Mammary epithelial cell (primary cell): ENCODE measurements at regions of chrX and their contacts with region 1.

Region 1: GRCh38 chrX:97498093-97498492 is 614.4 kb downstream of the RPA4 start:
- DNase-seq: no peak
- H3K4me3 ChIP-seq: no peak overlapping the region
- H3K27ac ChIP-seq: no peak overlapping the region
- H3K4me1 ChIP-seq: no peaks in the 10 kb centered on the region
- H3K27me3 ChIP-seq: no peaks in the 10 kb centered on the region
- CTCF ChIP-seq: no peak

Region 2: DNA sequence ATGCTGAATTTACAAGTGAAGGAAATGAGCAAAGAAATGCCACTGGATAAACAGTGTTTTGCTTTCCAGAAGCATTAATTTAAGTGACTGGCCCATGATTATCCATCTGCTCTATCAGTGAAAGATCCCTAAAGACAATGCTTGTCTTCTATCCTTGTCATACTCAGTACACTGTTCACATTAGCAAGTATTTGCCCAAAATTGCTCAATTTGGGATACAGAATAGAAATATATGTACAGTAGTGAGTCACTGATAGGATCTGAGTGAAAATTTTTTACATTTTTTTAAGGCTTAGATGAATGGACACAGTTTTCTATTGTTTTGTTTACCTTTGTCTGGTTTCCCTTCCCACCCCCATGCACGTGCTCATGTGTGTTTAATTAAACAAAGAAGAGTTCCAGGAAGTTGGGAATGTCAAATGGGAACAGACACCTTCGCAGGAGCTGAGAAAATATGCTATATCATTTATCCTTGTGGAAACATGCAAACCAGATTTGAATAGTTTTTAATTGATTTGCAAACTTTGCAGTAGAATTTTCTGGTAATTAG is 42.0 kb after region 1 on chrX:
- CTCF ChIA-PET with region 1: interaction called, 30 read pairs
- dilution Hi-C with region 1: no loop called
- in situ Hi-C with region 1: no loop called
- intact Hi-C with region 1: no loop called
- DNase-seq: no peak
- H3K4me3 ChIP-seq: no peak overlapping the region
- H3K27ac ChIP-seq: no peak overlapping the region
- H3K4me1 ChIP-seq: no peaks in the 10 kb centered on the region
- H3K27me3 ChIP-seq: peaks cover 2% of the 10 kb centered on the region
- CTCF ChIP-seq: no peak